ENCODE measurements at regions of chr15 and their contacts with region 1.

Region 1: GRCh38 chr15:90400406-90401314 is 12.6 kb downstream of the IQGAP1 start:
- DNase-seq: peak; percentile 73
- ATAC-seq: peak; percentile 99
- H3K4me3 Mint-ChIP-seq: peak overlapping the region; percentile 59
- H3K27ac Mint-ChIP-seq: peak overlapping the region; percentile 95
- H3K4me1 Mint-ChIP-seq: peaks cover 69% of the 10 kb centered on the region
- H3K27me3 Mint-ChIP-seq: no peaks in the 10 kb centered on the region

Region 2: GRCh38 chr15:90031231-90031791 is 369.3 kb before region 1 on chr15:
- CTCF ChIA-PET with region 1: no interaction called
- POLR2A ChIA-PET with region 1: no interaction called
- intact Hi-C with region 1: loop called in 1 of 2 experiments (anchors 10 kb)
- DNase-seq: peak; percentile 54
- ATAC-seq: peak; percentile 59
- H3K4me3 Mint-ChIP-seq: no peak overlapping the region
- H3K27ac Mint-ChIP-seq: peak overlapping the region; percentile 80
- H3K4me1 Mint-ChIP-seq: peaks cover 59% of the 10 kb centered on the region
- H3K27me3 Mint-ChIP-seq: no peaks in the 10 kb centered on the region

Region 3: GRCh38 chr15:90327311-90327710 is 73.3 kb before region 1 on chr15:
- CTCF ChIA-PET with region 1: no interaction called
- POLR2A ChIA-PET with region 1: no interaction called
- intact Hi-C with region 1: no loop called
- DNase-seq: no peak
- ATAC-seq: no peak
- H3K4me3 Mint-ChIP-seq: no peak overlapping the region
- H3K27ac Mint-ChIP-seq: no peak overlapping the region
- H3K4me1 Mint-ChIP-seq: no peaks in the 10 kb centered on the region
- H3K27me3 Mint-ChIP-seq: no peaks in the 10 kb centered on the region

Region 4: GRCh38 chr15:90362936-90363212 is 37.8 kb before region 1 on chr15:
- CTCF ChIA-PET with region 1: interaction called, 3 read pairs
- POLR2A ChIA-PET with region 1: interaction called, 3 read pairs
- intact Hi-C with region 1: loop called in 1 of 2 experiments (anchors 1 kb)
- DNase-seq: no peak
- ATAC-seq: no peak
- H3K4me3 Mint-ChIP-seq: no peak overlapping the region
- H3K27ac Mint-ChIP-seq: peak overlapping the region; percentile 5
- H3K4me1 Mint-ChIP-seq: peaks cover 25% of the 10 kb centered on the region
- H3K27me3 Mint-ChIP-seq: no peaks in the 10 kb centered on the region

Region 5: GRCh38 chr15:90376789-90377188 is 23.9 kb before region 1 on chr15:
- CTCF ChIA-PET with region 1: no interaction called
- POLR2A ChIA-PET with region 1: no interaction called
- intact Hi-C with region 1: no loop called
- DNase-seq: peak; percentile 66
- ATAC-seq: peak; percentile 88
- H3K4me3 Mint-ChIP-seq: peak overlapping the region; percentile 16
- H3K27ac Mint-ChIP-seq: peak overlapping the region; percentile 94
- H3K4me1 Mint-ChIP-seq: peaks cover 31% of the 10 kb centered on the region
- H3K27me3 Mint-ChIP-seq: no peaks in the 10 kb centered on the region

Region 6: DNA sequence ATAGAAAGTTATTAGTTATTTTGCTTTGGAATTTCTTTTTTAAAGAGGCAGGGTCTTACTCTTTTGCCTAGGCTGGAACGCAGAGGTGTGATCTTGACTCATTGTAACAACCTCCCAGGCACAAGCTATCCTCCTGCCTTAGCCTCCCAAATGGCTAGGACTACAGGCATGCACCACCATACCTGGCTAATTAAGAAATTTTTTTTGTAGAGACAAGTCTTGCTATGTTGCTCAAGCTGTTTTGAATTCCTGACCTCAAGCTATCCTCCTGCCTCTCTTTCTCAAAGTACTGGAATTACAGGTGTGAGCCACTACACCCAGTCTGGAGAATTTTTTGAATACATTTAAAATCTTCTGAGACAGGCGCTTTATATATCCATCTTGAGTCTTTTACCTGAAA is 36.9 kb after region 1 on chr15:
- CTCF ChIA-PET with region 1: no interaction called
- POLR2A ChIA-PET with region 1: no interaction called
- intact Hi-C with region 1: no loop called
- DNase-seq: no peak
- ATAC-seq: no peak
- H3K4me3 Mint-ChIP-seq: no peak overlapping the region
- H3K27ac Mint-ChIP-seq: no peak overlapping the region
- H3K4me1 Mint-ChIP-seq: peaks cover 8% of the 10 kb centered on the region
- H3K27me3 Mint-ChIP-seq: no peaks in the 10 kb centered on the region

Region 7: DNA sequence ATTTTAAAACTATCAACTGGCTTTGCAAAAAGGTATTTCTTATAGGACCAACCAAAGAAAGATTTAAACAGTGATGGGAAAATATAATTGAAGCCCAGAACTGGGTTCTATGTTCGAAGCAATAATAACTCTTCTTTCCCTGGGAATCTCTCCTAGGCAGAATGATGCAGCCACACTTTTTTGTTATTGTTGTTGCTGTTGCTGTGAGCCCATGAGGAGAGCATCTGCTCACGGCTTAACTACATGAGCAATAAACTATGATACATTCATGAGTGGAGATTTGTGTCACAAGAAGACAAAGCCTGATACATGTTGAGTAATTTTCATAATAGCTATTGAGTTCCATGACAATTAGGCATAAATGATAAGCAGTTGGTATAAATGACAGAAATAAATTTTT is 209.5 kb after region 1 on chr15:
- CTCF ChIA-PET with region 1: no interaction called
- POLR2A ChIA-PET with region 1: no interaction called
- intact Hi-C with region 1: no loop called
- DNase-seq: no peak
- ATAC-seq: no peak
- H3K4me3 Mint-ChIP-seq: no peak overlapping the region
- H3K27ac Mint-ChIP-seq: no peak overlapping the region
- H3K4me1 Mint-ChIP-seq: peaks cover 16% of the 10 kb centered on the region
- H3K27me3 Mint-ChIP-seq: no peaks in the 10 kb centered on the region

Measured in activated CD4-positive, alpha-beta T cell treated with anti-CD3 and anti-CD28 coated beads for 36 hours (primary cell).